Activated naive CD4-positive, alpha-beta T cell treated with anti-CD3 and anti-CD28 coated beads for 36 hours (primary cell): ENCODE measurements at regions of chr3 and their contacts with region 1.

Region 1: GRCh38 chr3:189157232-189158007 is 14.4 kb upstream of the TPRG1 start:
- DNase-seq: no peak
- H3K4me3 Mint-ChIP-seq: no peak overlapping the region
- H3K27ac Mint-ChIP-seq: no peak overlapping the region
- H3K4me1 Mint-ChIP-seq: no peaks in the 10 kb centered on the region
- H3K27me3 Mint-ChIP-seq: no peaks in the 10 kb centered on the region

Region 2: GRCh38 chr3:188180114-188180513 is 977.3 kb before region 1 on chr3:
- CTCF ChIA-PET with region 1: no interaction called
- intact Hi-C with region 1: loop called (anchors 5 kb)
- DNase-seq: no peak
- H3K4me3 Mint-ChIP-seq: no peak overlapping the region
- H3K27ac Mint-ChIP-seq: no peak overlapping the region
- H3K4me1 Mint-ChIP-seq: peaks cover 34% of the 10 kb centered on the region
- H3K27me3 Mint-ChIP-seq: no peaks in the 10 kb centered on the region

Region 3: GRCh38 chr3:189123595-189124387 is 33.6 kb before region 1 on chr3:
- CTCF ChIA-PET with region 1: no interaction called
- intact Hi-C with region 1: no loop called
- DNase-seq: no peak
- H3K4me3 Mint-ChIP-seq: no peak overlapping the region
- H3K27ac Mint-ChIP-seq: no peak overlapping the region
- H3K4me1 Mint-ChIP-seq: no peaks in the 10 kb centered on the region
- H3K27me3 Mint-ChIP-seq: no peaks in the 10 kb centered on the region

Region 4: GRCh38 chr3:189410522-189410921 is 253.1 kb after region 1 on chr3:
- CTCF ChIA-PET with region 1: no interaction called
- intact Hi-C with region 1: no loop called
- DNase-seq: no peak
- H3K4me3 Mint-ChIP-seq: no peak overlapping the region
- H3K27ac Mint-ChIP-seq: no peak overlapping the region
- H3K4me1 Mint-ChIP-seq: peaks cover under 1% of the 10 kb centered on the region
- H3K27me3 Mint-ChIP-seq: no peaks in the 10 kb centered on the region